ENCODE measurements at regions of chr4 and their contacts with region 1.

Region 1: GRCh38 chr4:158768555-158769174 is at the start of gene FNIP2:
- DNase-seq: peak; percentile 91
- ATAC-seq: peak; percentile 96
- total RNA-seq, gene FNIP2: 46.2 TPM

Region 2: DNA sequence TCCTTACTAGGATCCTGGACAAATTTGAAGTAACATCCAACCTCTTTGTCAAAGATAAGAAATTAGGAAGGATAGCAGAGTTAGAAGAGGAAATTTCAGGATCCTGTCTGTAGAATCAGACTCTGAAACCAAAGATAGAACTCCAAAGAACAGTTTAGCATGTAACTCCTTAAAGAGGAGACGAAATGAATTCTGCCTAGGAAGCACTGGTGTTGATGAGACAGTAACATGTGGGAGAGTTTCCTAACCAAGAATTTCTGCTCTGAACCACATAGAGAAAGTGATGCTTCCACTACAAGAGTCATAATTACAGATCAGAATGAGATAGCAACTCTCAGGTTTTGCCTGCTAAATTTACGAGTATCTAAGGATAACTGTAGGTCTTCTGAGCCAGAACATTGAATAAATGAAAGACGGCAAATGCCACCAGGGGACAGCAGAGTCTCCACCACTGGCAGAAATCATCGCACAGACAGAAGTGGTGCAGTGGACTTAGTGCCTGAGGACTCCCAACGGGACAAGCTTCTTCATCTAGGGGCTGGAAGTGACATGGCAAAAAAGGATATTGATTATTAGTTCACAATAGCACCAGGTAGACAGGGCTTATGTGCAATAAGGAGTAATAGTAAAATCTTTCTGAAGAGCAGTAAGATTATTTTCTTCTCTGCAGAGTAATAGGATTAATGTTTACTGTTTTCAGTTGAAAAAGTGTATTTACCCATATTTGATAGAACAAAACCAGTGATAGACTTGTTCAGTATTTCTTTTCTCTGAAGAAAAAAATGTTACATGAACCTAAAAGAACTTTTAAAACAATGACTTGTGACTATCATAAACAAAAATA is 38.7 kb before region 1 on chr4:
- intact Hi-C with region 1: loop called (anchors 5 kb)
- DNase-seq: peak; percentile 67
- ATAC-seq: peak; percentile 98

Region 3: GRCh38 chr4:158821228-158821971 is 52.7 kb after region 1 on chr4:
- intact Hi-C with region 1: loop called (anchors 5 kb)
- DNase-seq: no peak
- ATAC-seq: no peak

Region 4: DNA sequence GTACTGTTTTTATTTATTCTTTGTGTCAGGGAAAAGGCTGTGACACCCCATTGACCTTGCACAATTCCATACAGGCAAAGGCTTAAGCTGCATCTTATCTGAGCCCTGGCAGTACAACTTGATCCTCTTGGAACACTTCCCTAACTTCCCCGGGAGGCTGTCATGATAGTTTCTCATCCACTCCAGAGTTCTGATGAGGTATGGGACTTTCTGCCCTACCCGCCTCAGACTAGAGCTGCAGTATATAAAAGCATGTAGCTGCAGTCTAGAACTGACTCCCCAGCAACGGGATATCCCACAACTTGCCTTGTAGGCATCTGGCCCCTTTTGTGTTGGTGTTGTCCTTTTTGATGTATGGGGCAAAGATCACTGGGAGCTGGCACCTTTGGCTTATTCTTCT is 72.9 kb after region 1 on chr4:
- intact Hi-C with region 1: loop called (anchors 5 kb)
- DNase-seq: no peak
- ATAC-seq: peak; percentile 95

Measured in Right ventricle myocardium superior (tissue), 1 donor.